Mammary epithelial cell (primary cell): ENCODE measurements at regions of chr2 and their contacts with region 1.

Region 1: GRCh38 chr2:231399853-231400680 is 4.6 kb downstream of the B3GNT7 start:
- DNase-seq: peak; percentile 25
- H3K4me3 ChIP-seq: no peak overlapping the region
- H3K27ac ChIP-seq: no peak overlapping the region
- H3K4me1 ChIP-seq: peaks cover 13% of the 10 kb centered on the region
- H3K27me3 ChIP-seq: peaks cover 8% of the 10 kb centered on the region
- CTCF ChIP-seq: peak; percentile 1 to 18

Region 2: DNA sequence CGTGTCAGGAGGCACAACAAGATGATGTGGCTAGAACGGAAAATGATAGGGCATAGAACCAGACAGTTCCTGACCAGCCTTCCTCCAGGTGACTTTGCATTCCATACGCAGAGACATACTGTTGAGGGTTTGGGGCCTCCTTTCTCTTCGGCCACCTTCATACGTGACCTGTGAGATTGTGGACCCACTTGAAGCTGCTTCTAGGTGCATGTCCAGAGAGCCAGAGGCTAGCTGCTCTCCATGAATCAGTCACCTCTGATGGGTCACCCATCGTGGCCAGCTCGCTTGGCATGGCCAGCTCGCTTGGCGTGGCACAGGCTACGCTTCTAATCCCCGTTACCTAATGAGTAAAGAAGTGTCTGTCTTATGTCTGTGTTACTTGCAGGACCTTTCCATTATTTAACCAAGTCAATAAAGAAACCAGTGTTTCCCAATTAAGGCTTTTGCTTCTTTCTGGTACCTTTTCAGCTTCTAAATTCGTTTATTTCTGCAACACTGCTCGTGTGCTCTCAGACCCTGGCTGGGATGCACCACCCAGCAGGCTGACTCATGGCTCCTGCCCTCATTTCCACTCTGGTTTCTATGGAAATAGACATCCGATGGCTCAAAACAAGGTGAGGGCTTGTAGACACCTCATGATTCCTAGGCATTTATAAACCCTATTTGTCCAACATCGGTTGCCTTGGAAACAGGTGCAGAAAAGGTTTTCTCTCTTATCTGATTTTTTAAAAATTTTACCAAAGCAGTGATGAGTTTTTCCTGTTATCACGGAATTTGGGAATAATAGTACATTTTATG is 91.2 kb before region 1 on chr2:
- CTCF ChIA-PET with region 1: no interaction called
- dilution Hi-C with region 1: no loop called
- in situ Hi-C with region 1: loop called in 1 of 2 experiments (anchors 10 kb)
- intact Hi-C with region 1: no loop called
- DNase-seq: peak; percentile 40
- H3K4me3 ChIP-seq: no peak overlapping the region
- H3K27ac ChIP-seq: no peak overlapping the region
- H3K4me1 ChIP-seq: peaks cover 7% of the 10 kb centered on the region
- H3K27me3 ChIP-seq: no peaks in the 10 kb centered on the region
- CTCF ChIP-seq: no peak